Activated CD4-positive, alpha-beta T cell treated with anti-CD3 and anti-CD28 coated beads for 36 hours (primary cell): ENCODE measurements at regions of chr12 and their contacts with region 1.

Region 1: DNA sequence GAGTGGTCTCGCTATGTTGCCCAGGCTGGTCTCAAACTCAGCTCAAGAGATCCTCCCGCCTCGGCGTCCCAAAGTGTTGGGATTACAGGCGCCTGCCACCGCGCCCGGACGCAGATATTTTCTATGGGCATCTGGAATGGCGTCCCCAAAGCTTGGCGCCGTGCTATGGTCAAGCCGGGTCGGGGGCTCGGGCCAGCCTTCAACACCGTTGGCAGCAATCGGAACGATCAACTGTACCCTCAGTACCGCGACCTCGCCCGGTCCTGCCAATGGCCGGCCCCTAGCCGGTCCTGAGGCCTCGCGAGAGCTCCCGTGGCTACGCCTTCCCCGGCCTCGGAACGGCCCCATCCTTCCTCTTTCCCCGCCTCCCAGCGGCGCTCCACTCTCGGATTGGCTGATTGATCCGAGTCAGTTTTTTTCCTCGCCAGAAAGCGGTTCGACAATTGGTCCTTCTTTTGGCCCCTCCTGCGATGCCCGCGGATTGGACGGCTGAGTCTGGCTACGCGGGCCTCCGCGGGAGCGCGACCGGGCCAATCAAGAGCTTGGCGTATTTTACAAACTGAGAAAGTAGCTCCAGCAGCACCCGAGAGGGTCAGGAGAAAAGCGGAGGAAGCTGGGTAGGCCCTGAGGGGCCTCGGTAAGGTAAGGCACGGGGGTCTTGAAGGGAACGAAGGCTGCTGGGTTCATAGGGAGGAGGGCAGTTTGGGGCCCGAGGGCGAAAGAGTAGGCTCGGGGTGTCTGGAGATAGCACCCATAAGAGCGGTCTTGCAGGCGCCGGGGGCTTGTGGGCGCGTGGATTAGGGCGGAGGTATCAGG is at the start of gene TROAP:
- DNase-seq: peak; percentile 99
- ATAC-seq: peak; percentile 96
- H3K4me3 Mint-ChIP-seq: peak within 1 kb of the TSS; percentile 95
- H3K27ac Mint-ChIP-seq: peak within 1 kb of the TSS; percentile 95
- H3K4me1 Mint-ChIP-seq: peaks cover 10% of the 10 kb centered on the region
- H3K27me3 Mint-ChIP-seq: no peaks in the 10 kb centered on the region
- total RNA-seq, gene TROAP: 64.5 to 84.3 TPM

Region 2: GRCh38 chr12:49110464-49111155 is 212.3 kb before region 1 on chr12 and contains the start of gene LMBR1L:
- CTCF ChIA-PET with region 1: interaction called, 3 read pairs
- POLR2A ChIA-PET with region 1: interaction called, 8 read pairs
- intact Hi-C with region 1: loop called in 1 of 2 experiments (anchors 1 kb)
- DNase-seq: peak; percentile 97
- ATAC-seq: peak; percentile 98
- H3K4me3 Mint-ChIP-seq: peak within 1 kb of the TSS; percentile 96
- H3K27ac Mint-ChIP-seq: peak within 1 kb of the TSS; percentile 98
- H3K4me1 Mint-ChIP-seq: peaks cover 29% of the 10 kb centered on the region
- H3K27me3 Mint-ChIP-seq: no peaks in the 10 kb centered on the region
- total RNA-seq, gene LMBR1L: 45.0 to 48.0 TPM

Region 3: DNA sequence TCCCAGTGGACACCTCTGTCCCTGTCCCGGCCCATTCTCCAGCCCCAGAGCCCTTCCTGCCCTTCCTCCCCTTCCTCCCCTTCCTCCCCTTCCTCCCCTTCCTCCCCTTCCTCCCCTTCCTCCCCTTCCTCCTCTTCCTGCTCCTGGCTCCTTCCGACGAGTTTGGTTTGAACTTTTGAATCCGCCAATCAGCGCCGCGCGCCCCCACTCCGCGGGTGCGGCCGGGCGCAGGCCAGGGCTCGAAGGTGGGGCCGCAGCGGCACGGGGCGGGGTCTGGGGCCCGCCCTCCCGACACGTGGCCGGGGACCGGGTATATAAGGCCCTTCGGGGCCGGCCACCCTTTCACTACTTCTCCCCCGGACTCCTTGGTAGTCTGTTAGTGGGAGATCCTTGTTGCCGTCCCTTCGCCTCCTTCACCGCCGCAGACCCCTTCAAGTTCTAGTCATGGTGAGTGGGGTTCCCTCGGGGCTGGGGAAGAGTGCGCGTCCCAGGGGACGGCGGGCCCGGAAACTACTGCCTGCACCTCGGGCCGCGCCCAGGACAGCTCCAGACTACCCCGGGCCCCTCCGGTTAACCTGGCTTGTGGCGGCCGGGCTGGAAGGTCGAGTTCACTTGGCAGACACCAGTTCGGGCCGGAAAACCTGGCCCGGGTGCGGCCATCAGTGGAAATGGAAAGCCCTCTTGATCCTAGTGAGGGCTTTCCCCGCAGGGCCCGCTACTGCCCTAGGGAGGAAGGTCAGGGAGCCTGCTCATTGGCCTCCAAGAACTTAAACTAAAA is 58.0 kb before region 1 on chr12 and contains the start of gene TUBA1C:
- CTCF ChIA-PET with region 1: interaction called, 3 read pairs
- POLR2A ChIA-PET with region 1: interaction called, 6 read pairs
- intact Hi-C with region 1: loop called (anchors 1 to 2 kb)
- DNase-seq: peak; percentile 95
- ATAC-seq: peak; percentile 90
- H3K4me3 Mint-ChIP-seq: peak within 1 kb of the TSS; percentile 93
- H3K27ac Mint-ChIP-seq: peak within 1 kb of the TSS; percentile 96
- H3K4me1 Mint-ChIP-seq: peaks cover 47% of the 10 kb centered on the region
- H3K27me3 Mint-ChIP-seq: no peaks in the 10 kb centered on the region
- total RNA-seq, gene TUBA1C: 276 to 338 TPM

Region 4: GRCh38 chr12:49342066-49342913 is 19.4 kb after region 1 on chr12:
- CTCF ChIA-PET with region 1: interaction called, 27 read pairs
- POLR2A ChIA-PET with region 1: interaction called, 11 read pairs
- intact Hi-C with region 1: loop called (anchors 1 kb)
- DNase-seq: peak; percentile 92
- ATAC-seq: peak; percentile 81
- H3K4me3 Mint-ChIP-seq: peak overlapping the region; percentile 47
- H3K27ac Mint-ChIP-seq: no peak overlapping the region
- H3K4me1 Mint-ChIP-seq: peaks cover 47% of the 10 kb centered on the region
- H3K27me3 Mint-ChIP-seq: peaks cover 71% of the 10 kb centered on the region

Region 5: GRCh38 chr12:49403971-49404450 is 81.1 kb after region 1 on chr12:
- CTCF ChIA-PET with region 1: no interaction called
- POLR2A ChIA-PET with region 1: no interaction called
- intact Hi-C with region 1: no loop called
- DNase-seq: no peak
- ATAC-seq: no peak
- H3K4me3 Mint-ChIP-seq: no peak overlapping the region
- H3K27ac Mint-ChIP-seq: no peak overlapping the region
- H3K4me1 Mint-ChIP-seq: peaks cover 10% of the 10 kb centered on the region
- H3K27me3 Mint-ChIP-seq: no peaks in the 10 kb centered on the region

Region 6: DNA sequence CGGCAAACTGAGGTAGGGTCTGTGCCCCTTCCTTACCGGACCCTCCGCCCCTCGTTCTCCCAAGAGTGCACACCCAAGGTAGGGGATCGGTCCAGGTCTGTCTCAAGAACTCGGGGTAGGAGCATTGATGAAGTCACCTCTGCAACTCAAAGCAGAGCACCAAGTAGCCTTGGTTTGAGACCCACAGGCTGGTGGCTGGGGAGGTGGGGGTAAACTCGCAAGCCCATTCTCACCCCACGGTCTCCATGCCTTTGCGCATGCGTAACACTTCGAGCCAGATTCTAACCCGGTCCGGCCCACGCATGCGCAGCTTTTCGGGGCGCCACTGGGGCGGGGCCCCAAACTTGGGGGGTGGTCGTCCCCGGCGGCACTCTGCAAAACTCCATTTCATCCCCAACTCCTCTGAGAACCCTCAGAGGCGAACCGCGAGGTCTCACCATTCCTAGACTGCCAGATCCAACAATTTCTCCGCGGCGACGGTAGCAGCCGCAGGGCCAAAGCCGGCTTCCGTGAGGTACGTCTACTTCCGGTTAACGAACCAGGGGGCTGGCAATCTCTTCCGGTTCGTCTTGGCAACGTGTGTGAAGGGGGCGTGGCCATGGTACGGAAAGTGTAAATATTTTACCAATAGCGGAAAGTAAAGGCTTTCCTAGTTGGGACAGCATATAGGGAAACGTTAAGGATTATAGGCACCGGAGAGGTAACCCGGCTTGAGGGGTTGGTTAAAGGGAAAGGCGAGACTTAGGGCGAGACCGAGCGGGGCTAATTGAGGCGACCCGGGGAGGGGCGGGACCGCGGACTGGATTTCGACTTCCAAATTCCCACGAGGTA is 244.9 kb after region 1 on chr12 and contains the start of gene MCRS1:
- CTCF ChIA-PET with region 1: no interaction called
- POLR2A ChIA-PET with region 1: no interaction called
- intact Hi-C with region 1: loop called in 1 of 2 experiments (anchors 1 kb)
- DNase-seq: peak; percentile 93
- ATAC-seq: peak; percentile 88
- H3K4me3 Mint-ChIP-seq: peak within 1 kb of the TSS; percentile 90
- H3K27ac Mint-ChIP-seq: peak within 1 kb of the TSS; percentile 95
- H3K4me1 Mint-ChIP-seq: peaks cover 37% of the 10 kb centered on the region
- H3K27me3 Mint-ChIP-seq: no peaks in the 10 kb centered on the region
- total RNA-seq, gene MCRS1: 48.2 to 58.2 TPM

Region 7: DNA sequence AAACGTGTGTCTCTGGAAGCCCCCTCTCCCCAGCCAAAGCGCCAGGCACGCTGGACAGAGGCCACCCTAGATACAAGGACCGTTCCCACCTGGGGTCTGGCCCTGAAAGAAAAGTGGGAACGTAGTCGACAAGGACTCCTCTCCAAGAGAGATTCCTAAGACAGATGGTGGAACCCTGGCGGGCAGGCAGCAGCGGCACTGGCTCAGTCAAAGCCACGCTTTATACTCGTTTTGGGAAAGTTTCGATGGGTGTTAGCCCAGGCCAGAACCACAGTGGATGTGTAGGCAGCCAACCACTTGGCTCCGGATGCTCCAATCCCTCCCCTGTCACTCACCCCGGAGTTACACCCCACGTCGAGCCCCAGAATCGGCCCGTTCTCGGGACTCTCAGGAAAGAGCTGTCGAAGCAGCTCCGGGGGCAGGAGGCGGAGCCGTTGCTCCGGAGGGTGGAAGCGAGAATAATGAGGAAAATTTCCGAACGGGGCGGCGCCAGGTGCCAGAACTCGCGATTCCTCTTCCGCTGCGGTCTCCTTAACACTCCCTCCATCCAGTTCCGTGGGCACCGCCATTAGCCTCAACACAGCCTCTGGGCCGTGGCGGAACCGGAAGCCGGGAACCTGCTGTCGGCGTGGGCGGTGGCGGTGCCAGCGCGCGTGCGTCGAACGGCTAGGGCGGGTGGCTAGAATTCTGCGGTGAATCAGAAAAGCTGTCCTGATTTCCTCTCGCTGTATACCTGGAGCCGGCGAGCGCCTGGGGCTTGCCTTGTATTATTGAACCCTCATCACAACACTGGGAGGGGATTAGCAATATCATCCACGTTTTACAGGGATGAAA is 519.8 kb after region 1 on chr12 and contains the start of gene BCDIN3D:
- CTCF ChIA-PET with region 1: no interaction called
- POLR2A ChIA-PET with region 1: no interaction called
- intact Hi-C with region 1: loop called in 1 of 2 experiments (anchors 2 kb)
- DNase-seq: peak; percentile 97
- ATAC-seq: peak; percentile 92
- H3K4me3 Mint-ChIP-seq: peak within 1 kb of the TSS; percentile 90
- H3K27ac Mint-ChIP-seq: peak within 1 kb of the TSS; percentile 91
- H3K4me1 Mint-ChIP-seq: peaks cover 30% of the 10 kb centered on the region
- H3K27me3 Mint-ChIP-seq: no peaks in the 10 kb centered on the region
- total RNA-seq, gene BCDIN3D: 5.5 to 5.6 TPM